GM12878 (cell line): ENCODE measurements at regions of chr4 and their contacts with region 1.

Region 1: GRCh38 chr4:152243896-152244595 is 291.8 kb downstream of the FBXW7 start:
- DNase-seq: no peak
- ATAC-seq: no peak
- H3K4me3 ChIP-seq: no peak overlapping the region
- H3K27ac ChIP-seq: no peak overlapping the region
- H3K4me1 ChIP-seq: no peaks in the 10 kb centered on the region
- H3K27me3 ChIP-seq: no peaks in the 10 kb centered on the region; a peak in 1 of 4 replicates
- CTCF ChIP-seq: no peak
- EP300 ChIP-seq: no peak
- POLR2A ChIP-seq: no peak
- RAD21 ChIP-seq: no peak

Region 2: DNA sequence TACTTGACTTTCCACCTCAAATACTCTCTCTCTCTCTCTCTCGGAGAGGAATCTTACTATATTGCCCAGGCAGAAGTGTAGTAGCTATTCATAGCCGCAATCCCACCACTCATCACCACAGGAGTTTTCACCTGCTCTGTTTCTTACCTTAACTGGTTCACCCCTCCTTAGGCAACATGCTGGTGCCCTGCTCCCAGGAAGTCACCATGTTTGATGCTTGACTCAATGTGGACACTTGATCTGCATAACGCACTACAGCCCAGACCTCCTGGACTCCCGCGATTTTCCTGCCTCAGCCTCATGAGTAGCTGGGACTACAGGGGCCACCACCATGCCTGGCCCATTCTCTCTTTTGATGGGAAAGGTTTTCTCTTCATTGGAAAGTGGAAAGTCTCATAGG is 20.1 kb after region 1 on chr4:
- CTCF ChIA-PET with region 1: no interaction called
- POLR2A ChIA-PET with region 1: no interaction called
- RAD21 ChIA-PET with region 1: interaction called, 3 read pairs
- SMC1A ChIA-PET with region 1: interaction called, 10 read pairs
- in situ Hi-C with region 1: no loop called
- intact Hi-C with region 1: no loop called
- DNase-seq: no peak
- ATAC-seq: no peak
- H3K4me3 ChIP-seq: no peak overlapping the region
- H3K27ac ChIP-seq: no peak overlapping the region
- H3K4me1 ChIP-seq: no peaks in the 10 kb centered on the region
- H3K27me3 ChIP-seq: 0 out of 4 replicates have a peak, but pooled peaks cover 0 to 2% of the 10 kb centered on the region in 2 experiments
- CTCF ChIP-seq: no peak
- EP300 ChIP-seq: no peak
- POLR2A ChIP-seq: no peak
- RAD21 ChIP-seq: no peak

Region 3: GRCh38 chr4:152634110-152634760 is 390.2 kb after region 1 on chr4:
- CTCF ChIA-PET with region 1: no interaction called
- POLR2A ChIA-PET with region 1: no interaction called
- RAD21 ChIA-PET with region 1: no interaction called
- SMC1A ChIA-PET with region 1: no interaction called
- in situ Hi-C with region 1: no loop called
- intact Hi-C with region 1: no loop called
- DNase-seq: no peak
- ATAC-seq: no peak
- H3K4me3 ChIP-seq: no peak overlapping the region
- H3K27ac ChIP-seq: no peak overlapping the region
- H3K4me1 ChIP-seq: peaks cover 25% of the 10 kb centered on the region
- H3K27me3 ChIP-seq: no peaks in the 10 kb centered on the region
- CTCF ChIP-seq: no peak
- EP300 ChIP-seq: no peak
- POLR2A ChIP-seq: no peak
- RAD21 ChIP-seq: no peak